Heart left ventricle (tissue), 16 donors: ENCODE measurements at regions of chr11 and their contacts with region 1.

Region 1: DNA sequence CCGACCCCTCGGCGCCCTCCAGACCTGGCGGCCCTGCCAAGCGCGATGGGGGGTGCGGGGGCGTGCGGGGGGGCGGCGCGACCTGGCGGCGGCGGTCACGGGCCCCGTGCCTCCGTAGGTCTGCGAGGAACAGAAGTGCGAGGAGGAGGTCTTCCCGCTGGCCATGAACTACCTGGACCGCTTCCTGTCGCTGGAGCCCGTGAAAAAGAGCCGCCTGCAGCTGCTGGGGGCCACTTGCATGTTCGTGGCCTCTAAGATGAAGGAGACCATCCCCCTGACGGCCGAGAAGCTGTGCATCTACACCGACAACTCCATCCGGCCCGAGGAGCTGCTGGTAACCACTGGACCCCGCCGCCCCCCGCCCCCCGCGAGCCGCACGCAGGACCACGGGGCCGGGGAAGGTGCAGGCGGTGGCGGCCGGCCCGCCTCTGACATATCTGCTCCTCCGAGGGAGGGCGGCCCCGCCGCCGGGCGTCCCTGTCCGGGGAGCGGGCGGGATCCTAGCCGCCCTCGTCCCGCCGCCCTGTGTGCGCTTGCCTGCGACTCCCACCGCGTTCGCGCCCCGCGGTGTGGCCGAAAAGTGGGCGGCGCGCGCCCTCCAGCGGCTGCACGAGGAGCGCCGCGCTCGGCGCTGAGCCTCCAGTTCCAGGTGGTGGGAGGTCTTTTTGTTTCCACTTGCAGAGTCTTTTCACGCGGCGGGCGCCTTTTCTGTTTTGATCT is 2.1 kb downstream of the CCND1 start:
- DNase-seq: peak; percentile 82 to 93 (median 85)
- ATAC-seq: peak; percentile 23 to 68 (median 55)
- H3K4me3 ChIP-seq: peak overlapping the region; percentile 72 to 97 (median 88)
- H3K27ac ChIP-seq: peak overlapping the region; percentile 89 to 100 (median 97)
- H3K4me1 ChIP-seq: peaks cover 6 to 74% (median 62%) of the 10 kb centered on the region in 12 donors
- H3K27me3 ChIP-seq: peaks cover 0 to 37% (median 0%) of the 10 kb centered on the region in 9 donors
- CTCF ChIP-seq: peak; percentile 87 to 97 (median 95)
- POLR2A ChIP-seq: peak in 1 of 2 donors; percentile 30

Region 2: DNA sequence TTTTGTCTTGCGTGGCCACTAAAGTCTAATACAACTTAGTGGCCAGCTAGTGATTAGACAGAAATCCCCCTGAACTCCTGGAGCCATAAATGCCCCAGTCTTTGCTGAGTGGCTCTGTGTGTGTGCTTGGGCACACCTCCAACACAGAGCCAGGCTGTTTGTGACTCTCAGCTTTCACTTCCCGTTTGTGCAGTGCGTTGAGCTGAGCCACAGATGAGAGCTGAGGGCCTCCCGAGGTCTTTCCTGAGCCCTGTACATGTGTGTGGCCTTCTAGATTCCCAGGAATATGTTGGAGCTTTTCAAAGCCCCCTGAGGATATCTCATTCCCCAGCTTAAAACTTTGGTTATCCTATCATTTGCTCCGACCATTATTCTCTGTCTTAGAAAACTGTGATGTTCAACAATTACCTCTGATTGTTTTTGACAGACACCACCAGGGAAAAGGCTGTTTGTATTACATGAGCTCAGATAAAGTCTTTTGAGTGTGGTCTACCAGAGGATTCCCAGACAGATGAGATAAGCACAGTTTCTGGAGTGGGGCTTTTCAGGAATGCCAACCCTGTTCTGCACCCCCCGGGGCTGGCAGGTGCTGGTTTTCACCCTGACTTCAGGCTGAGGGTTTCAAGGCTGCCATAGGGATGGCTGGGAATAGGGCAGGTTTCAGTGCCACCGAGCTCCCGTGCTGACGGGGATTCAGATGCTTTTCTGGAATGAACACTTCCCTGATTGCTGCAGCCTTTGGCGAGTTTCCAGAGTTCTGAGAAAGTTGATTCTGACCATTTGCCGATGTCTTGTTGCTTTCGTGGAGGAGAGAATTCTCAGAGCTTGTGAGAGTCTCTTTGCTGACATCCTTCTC is 715.6 kb before region 1 on chr11:
- intact Hi-C with region 1: loop called in 2 of 10 experiments (anchors 10 kb)
- DNase-seq: peak in 2 of 5 donors; percentile 23 to 59
- ATAC-seq: peak in 3 of 4 donors; percentile 45 to 54 (median 46)
- H3K4me3 ChIP-seq: no peak overlapping the region
- H3K27ac ChIP-seq: peak overlapping the region in 9 of 12 donors; percentile 6 to 82 (median 58)
- H3K4me1 ChIP-seq: peaks cover 13 to 35% (median 27%) of the 10 kb centered on the region in 12 donors
- H3K27me3 ChIP-seq: no peaks in the 10 kb centered on the region
- CTCF ChIP-seq: no peak
- POLR2A ChIP-seq: no peak

Region 3: GRCh38 chr11:69115586-69116560 is 527.2 kb before region 1 on chr11:
- intact Hi-C with region 1: loop called in 5 of 10 experiments (anchors 5 kb)
- DNase-seq: peak; percentile 72 to 92 (median 81)
- ATAC-seq: peak; percentile 91 to 96 (median 94)
- H3K4me3 ChIP-seq: peak overlapping the region in 1 of 12 donors; percentile 5
- H3K27ac ChIP-seq: peak overlapping the region in 10 of 12 donors; percentile 38 to 79 (median 68)
- H3K4me1 ChIP-seq: peaks cover 0 to 19% (median 8%) of the 10 kb centered on the region in 12 donors
- H3K27me3 ChIP-seq: no peaks in the 10 kb centered on the region
- CTCF ChIP-seq: no peak
- POLR2A ChIP-seq: no peak

Region 4: GRCh38 chr11:69131644-69132300 is 511.3 kb before region 1 on chr11:
- intact Hi-C with region 1: loop called in 4 of 10 experiments (anchors 2 to 5 kb)
- DNase-seq: peak in 4 of 5 donors; percentile 63 to 81 (median 70)
- ATAC-seq: peak; percentile 75 to 86 (median 81)
- H3K4me3 ChIP-seq: no peak overlapping the region
- H3K27ac ChIP-seq: peak overlapping the region in 8 of 12 donors; percentile 1 to 68 (median 41)
- H3K4me1 ChIP-seq: peaks cover 0 to 20% (median 14%) of the 10 kb centered on the region in 12 donors
- H3K27me3 ChIP-seq: no peaks in the 10 kb centered on the region
- CTCF ChIP-seq: peak; percentile 63 to 89 (median 85)
- POLR2A ChIP-seq: no peak

Region 5: DNA sequence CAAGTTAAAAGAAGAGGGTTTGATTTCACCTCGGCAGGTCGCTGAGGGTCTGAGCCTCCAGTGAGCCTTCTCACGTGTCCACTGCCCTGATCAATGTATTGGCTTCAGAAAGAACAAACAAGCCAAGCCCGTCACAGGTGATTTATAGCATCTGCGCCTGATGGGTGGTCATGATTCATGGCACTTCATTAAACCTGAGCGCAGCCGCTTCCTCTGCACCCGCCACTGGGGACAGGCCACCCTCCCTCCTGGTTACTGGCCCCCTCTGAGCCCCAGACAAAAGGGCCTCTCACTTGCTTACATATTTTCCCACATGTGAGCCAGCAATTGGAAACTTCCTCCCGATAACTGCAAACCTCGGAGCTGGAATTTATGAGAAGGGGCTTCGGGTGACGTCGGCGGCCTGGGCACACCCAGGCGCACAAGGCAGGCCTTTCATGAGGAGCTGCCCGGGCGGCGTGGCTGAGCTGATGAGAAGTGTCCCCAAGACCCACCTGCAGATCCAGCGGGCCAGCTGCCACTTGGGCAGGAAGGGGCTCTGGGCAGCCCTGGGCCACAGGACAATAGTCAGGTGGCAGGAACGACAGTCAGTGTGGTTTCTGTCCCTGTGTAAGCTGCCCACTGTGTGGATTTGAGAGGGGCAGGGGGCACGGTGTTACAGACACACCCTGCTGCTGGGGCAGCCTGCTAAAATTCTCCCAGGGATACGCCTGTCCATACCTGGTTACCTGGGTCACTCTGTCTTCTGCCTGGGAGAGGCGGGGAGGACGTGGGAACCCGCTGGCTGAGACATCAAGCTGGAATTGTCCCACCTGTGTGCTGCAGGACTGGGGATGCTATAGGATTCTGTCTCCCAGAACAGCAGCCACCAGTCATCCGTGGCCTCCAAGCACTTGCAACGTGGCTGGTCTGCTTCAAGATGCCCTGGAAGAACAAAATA is 225.7 kb before region 1 on chr11:
- intact Hi-C with region 1: loop called in 1 of 10 experiments (anchors 10 kb)
- DNase-seq: peak in 1 of 5 donors; percentile 28
- ATAC-seq: no peak
- H3K4me3 ChIP-seq: no peak overlapping the region
- H3K27ac ChIP-seq: peak overlapping the region; percentile 52 to 91 (median 72)
- H3K4me1 ChIP-seq: peaks cover 5 to 51% (median 35%) of the 10 kb centered on the region in 12 donors
- H3K27me3 ChIP-seq: no peaks in the 10 kb centered on the region
- CTCF ChIP-seq: no peak
- POLR2A ChIP-seq: no peak

Region 6: GRCh38 chr11:69497221-69497787 is 145.8 kb before region 1 on chr11:
- intact Hi-C with region 1: loop called in 6 of 10 experiments (anchors 2 to 10 kb)
- DNase-seq: peak; percentile 87 to 96 (median 91)
- ATAC-seq: peak; percentile 95 to 98 (median 97)
- H3K4me3 ChIP-seq: no peak overlapping the region
- H3K27ac ChIP-seq: peak overlapping the region; percentile 64 to 94 (median 88)
- H3K4me1 ChIP-seq: peaks cover 3 to 70% (median 28%) of the 10 kb centered on the region in 12 donors
- H3K27me3 ChIP-seq: no peaks in the 10 kb centered on the region
- CTCF ChIP-seq: peak in 2 of 12 donors; percentile 7 to 15
- POLR2A ChIP-seq: peak in 1 of 2 donors; percentile 23

Region 7: DNA sequence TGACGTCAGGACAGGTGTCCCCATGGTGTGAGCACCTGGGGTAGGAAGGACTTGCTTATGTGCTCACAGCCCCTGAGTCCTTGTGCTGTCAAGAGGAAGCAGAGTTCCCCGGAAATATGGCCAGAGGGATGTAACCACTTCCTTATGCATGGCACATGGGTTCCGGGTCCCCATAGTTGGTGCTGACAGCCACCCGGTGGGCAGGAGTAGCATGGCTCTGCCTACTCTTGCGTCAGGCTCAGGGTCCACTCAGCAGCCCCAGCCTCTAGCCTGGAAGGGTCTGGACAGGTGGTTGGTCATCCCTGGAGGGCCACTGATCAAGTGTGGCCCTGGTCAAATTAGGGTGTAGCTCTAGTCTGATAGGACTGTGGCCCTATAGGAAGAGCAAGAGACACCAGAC is 44.9 kb before region 1 on chr11:
- intact Hi-C with region 1: no loop called
- DNase-seq: no peak
- ATAC-seq: peak in 2 of 4 donors; percentile 48 to 64
- H3K4me3 ChIP-seq: no peak overlapping the region
- H3K27ac ChIP-seq: no peak overlapping the region
- H3K4me1 ChIP-seq: no peaks in the 10 kb centered on the region
- H3K27me3 ChIP-seq: peaks cover 0 to 3% (median 0%) of the 10 kb centered on the region in 9 donors
- CTCF ChIP-seq: peak in 7 of 12 donors; percentile 15 to 37 (median 28)
- POLR2A ChIP-seq: no peak

Region 8: DNA sequence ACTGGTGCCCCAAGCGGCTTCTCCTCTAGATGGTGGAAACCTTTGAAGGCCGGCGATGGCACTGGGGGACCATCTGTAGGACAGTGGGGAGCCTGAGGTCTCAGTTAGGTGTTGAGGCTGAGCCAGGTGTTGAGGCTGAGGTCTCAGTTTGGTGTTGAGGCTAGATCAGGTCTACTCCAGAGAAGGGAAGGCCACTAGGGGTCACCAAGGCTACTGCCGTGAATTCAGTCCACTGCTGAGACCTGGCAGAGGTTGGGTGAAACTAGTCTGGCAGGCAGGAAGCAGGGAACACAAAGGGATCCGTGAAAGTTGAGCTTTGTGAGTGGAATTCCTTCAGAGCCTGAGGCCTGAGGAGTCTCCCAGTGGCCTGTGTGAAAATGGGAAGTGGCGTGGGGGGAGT is 300.0 kb after region 1 on chr11:
- intact Hi-C with region 1: no loop called
- DNase-seq: peak in 1 of 5 donors; percentile 18
- ATAC-seq: peak in 1 of 4 donors; percentile 3
- H3K4me3 ChIP-seq: no peak overlapping the region
- H3K27ac ChIP-seq: peak overlapping the region in 11 of 12 donors; percentile 4 to 94 (median 59)
- H3K4me1 ChIP-seq: peaks cover 0 to 26% (median 12%) of the 10 kb centered on the region in 12 donors
- H3K27me3 ChIP-seq: no peaks in the 10 kb centered on the region
- CTCF ChIP-seq: peak in 3 of 12 donors; percentile 17 to 25 (median 21)
- POLR2A ChIP-seq: no peak